ENCODE measurements at regions of chr15 and their contacts with region 1.

Region 1: DNA sequence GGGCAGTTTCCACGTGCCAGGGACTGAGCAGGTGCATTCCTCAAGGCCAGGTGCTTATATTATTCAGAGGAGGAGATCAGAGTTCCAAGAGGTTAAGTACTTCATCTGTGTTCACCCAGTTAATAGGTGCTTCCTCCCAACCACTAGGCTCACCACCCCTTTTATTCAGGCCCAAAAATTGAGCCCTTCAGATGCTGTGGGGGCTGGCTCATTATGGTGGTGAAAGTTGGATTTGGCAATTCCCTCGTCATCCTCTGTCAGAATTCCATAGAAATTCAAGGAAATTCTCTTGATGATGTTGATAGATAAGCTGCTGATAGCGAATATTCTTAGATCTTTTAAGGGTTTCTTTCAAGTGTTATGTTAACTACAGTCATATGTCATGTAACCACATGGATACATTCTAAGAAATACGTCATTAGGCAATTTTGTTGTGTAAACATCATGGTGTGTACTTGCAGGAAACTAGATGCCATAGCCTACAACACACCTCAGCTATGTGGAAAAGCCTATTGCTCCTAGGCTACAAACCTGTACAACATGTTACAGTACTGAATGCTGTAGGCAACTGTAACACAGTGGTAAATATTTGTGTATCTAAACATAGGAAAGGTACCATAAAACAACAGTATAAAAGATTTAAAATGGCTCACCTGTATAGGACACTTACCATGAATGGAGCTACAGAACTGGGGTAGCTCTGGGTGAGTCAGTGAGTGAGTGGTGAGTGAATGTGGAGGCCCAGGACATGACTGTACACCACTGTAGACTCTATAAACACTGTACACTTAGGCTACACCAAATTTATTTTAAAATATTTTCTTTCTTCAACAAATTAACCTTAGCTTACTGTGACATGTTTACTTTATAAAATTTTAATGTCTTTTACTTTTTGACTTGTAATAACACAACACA is 34.5 kb downstream of the GLDN start:
- DNase-seq: peak; percentile 76
- ATAC-seq: peak; percentile 96
- H3K4me3 ChIP-seq: no peak overlapping the region
- H3K27ac ChIP-seq: peak overlapping the region; percentile 78
- H3K4me1 ChIP-seq: peaks cover 19% of the 10 kb centered on the region
- H3K27me3 ChIP-seq: no peaks in the 10 kb centered on the region
- CTCF ChIP-seq: no peak

Region 2: DNA sequence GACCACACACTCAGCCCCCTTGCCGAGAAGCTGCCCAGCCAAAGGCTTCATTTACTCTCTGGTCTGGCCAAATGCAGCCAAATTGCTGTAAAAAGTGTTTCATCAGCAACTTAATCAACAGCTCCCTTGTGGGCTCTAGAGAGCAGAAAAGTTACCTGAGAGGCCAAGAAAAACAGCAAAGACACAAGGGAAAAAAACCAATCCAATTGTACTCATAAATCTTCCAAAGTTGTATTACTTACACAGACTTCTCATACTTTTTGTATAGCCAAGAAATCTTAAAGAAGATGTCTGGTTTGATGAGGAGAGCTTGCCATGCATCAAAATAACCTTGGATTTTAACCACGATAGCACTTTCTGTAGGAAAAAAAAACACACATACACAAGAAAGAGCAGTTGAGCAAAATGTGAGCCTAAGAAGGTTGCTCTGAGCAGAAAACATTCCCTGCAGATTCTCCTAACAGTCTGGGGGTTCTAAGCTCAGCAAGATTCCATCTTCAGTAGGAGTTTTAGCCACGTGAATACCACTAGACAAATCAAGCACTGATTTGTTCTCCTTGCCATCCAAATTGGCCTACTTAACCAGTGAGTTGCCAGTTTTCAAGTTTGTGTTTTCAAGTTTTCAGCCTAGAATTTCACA is 157.6 kb before region 1 on chr15:
- CTCF ChIA-PET with region 1: no interaction called
- POLR2A ChIA-PET with region 1: interaction called, 12 read pairs
- intact Hi-C with region 1: no loop called
- DNase-seq: no peak
- ATAC-seq: no peak
- H3K4me3 ChIP-seq: no peak overlapping the region
- H3K27ac ChIP-seq: no peak overlapping the region
- H3K4me1 ChIP-seq: 0 out of 2 replicates have a peak, but pooled peaks cover 2% of the 10 kb centered on the region
- H3K27me3 ChIP-seq: peaks cover 20% of the 10 kb centered on the region
- CTCF ChIP-seq: no peak

Measured in PC-3 (cell line).